Activated CD4-positive, alpha-beta memory T cell treated with anti-CD3 and anti-CD28 coated beads for 36 hours (primary cell): ENCODE measurements at regions of chr9 and their contacts with region 1.

Region 1: DNA sequence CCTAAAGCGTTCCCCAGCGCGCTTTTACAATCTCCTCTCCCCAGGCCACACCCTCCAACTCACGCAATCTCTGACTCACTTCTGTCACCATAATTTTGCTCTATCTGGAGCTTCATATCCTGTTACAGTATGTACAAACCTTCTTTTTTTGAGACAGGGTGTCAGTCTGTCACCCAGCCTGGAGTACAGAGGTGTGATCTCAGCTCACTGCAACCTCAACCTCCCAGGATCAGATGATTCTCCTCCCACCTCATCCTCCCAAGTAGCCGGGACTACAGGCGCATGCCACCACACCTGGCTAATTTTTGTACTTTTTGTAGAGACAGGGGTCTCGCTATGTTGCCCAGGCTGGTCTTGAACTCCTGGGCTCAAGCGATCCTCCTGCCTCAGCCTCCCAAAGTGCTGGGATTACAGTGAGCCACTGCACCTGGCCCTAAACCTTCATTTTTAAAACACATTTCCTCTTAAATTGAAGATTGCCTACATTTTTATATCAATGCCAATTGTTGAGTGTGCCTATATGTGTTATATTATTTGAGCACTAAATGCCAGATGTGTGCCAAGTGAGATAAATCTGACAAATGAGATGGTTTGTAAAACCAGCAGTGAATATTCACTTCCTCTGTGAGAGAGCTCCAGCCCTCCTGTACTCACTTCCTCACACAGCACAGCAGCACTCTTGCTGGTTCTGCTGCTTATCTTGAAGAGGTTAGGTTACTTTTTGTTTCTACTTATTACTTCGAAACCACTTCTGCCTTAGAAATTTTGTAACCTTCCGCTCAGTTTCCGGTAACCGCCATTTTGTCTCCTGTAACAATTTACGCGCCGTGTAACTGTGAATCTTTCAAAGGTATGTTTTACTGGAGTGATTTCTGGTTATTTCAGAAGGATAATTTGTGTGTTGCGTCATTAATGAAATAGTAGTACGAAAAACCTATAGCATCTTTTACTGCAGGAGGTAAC is 57.9 kb downstream of the DOCK8 start:
- DNase-seq: peak; percentile 83
- H3K4me3 Mint-ChIP-seq: peak overlapping the region; percentile 86
- H3K27ac Mint-ChIP-seq: peak overlapping the region; percentile 100
- H3K4me1 Mint-ChIP-seq: peaks cover 64% of the 10 kb centered on the region
- H3K27me3 Mint-ChIP-seq: no peaks in the 10 kb centered on the region

Region 2: DNA sequence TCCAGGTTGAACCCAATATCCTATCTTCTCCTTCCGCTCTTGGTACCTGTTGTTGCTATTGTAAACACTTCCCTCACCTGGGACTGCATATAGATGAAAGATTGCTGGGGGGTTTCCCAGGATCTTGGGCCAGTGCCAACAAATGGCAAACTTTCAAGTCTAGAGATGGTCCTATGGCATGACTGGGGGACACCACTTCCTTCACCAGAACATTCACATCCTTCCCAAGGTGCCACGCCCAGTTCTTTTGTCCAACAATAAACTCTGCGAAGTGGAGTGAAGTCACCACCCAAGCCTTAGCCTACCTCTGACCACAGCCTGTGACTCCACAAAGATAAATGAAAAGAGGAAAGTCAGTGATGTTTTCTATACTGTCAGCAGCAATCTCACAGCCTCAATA is 23.5 kb before region 1 on chr9:
- CTCF ChIA-PET with region 1: no interaction called
- POLR2A ChIA-PET with region 1: no interaction called
- intact Hi-C with region 1: loop called (anchors 2 kb)
- DNase-seq: peak; percentile 52
- H3K4me3 Mint-ChIP-seq: no peak overlapping the region
- H3K27ac Mint-ChIP-seq: peak overlapping the region; percentile 71
- H3K4me1 Mint-ChIP-seq: peaks cover 18% of the 10 kb centered on the region
- H3K27me3 Mint-ChIP-seq: no peaks in the 10 kb centered on the region

Region 3: GRCh38 chr9:306887-307286 is 34.4 kb after region 1 on chr9:
- CTCF ChIA-PET with region 1: no interaction called
- POLR2A ChIA-PET with region 1: no interaction called
- intact Hi-C with region 1: loop called (anchors 2 kb)
- DNase-seq: peak; percentile 69
- H3K4me3 Mint-ChIP-seq: no peak overlapping the region
- H3K27ac Mint-ChIP-seq: peak overlapping the region; percentile 44
- H3K4me1 Mint-ChIP-seq: peaks cover 19% of the 10 kb centered on the region
- H3K27me3 Mint-ChIP-seq: no peaks in the 10 kb centered on the region

Region 4: DNA sequence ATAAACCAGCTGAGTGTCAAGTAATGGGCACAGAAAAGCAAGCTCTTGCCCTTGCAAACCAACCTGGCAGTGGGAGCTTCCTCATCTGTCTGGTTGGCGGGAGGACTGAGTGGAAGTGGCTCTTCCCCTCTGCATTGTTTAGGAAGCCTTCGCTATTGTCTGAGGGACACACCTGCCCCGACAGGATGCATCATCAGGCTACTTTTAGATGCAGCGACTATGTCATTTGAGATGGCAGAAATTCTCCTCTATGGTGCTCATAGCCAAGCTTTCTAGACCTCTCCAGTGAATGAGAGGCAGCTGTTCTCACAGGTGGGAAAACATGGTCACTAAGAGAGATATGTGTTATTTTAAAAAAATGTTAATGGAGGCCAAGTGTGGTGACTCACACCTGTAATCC is 46.1 kb after region 1 on chr9:
- CTCF ChIA-PET with region 1: no interaction called
- POLR2A ChIA-PET with region 1: no interaction called
- intact Hi-C with region 1: no loop called
- DNase-seq: no peak
- H3K4me3 Mint-ChIP-seq: no peak overlapping the region
- H3K27ac Mint-ChIP-seq: no peak overlapping the region
- H3K4me1 Mint-ChIP-seq: peaks cover 6% of the 10 kb centered on the region
- H3K27me3 Mint-ChIP-seq: no peaks in the 10 kb centered on the region

Region 5: GRCh38 chr9:347667-348292 is 75.2 kb after region 1 on chr9:
- CTCF ChIA-PET with region 1: no interaction called
- POLR2A ChIA-PET with region 1: no interaction called
- intact Hi-C with region 1: no loop called
- DNase-seq: no peak
- H3K4me3 Mint-ChIP-seq: no peak overlapping the region
- H3K27ac Mint-ChIP-seq: peak overlapping the region; percentile 4
- H3K4me1 Mint-ChIP-seq: peaks cover 31% of the 10 kb centered on the region
- H3K27me3 Mint-ChIP-seq: no peaks in the 10 kb centered on the region

Region 6: DNA sequence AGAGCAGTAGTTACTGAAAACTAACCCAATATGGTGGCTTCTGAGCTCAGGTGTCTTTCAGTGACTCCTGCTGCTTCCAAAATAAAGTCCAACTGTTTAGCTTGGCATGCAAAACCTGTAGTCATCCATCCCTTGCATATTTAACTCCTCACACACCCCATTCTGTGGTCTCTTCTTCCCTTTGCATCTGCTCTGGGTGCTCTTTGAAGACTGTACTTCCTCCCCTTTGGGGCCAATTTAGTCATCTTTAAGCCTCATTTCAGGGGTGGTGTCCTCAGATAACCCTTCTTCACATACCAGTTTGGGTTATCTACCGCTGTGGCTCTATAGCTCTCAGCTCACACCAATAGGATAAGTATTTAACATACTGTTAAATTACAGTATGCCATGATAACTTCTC is 359.1 kb after region 1 on chr9:
- CTCF ChIA-PET with region 1: no interaction called
- POLR2A ChIA-PET with region 1: no interaction called
- intact Hi-C with region 1: loop called (anchors 10 kb)
- DNase-seq: no peak
- H3K4me3 Mint-ChIP-seq: no peak overlapping the region
- H3K27ac Mint-ChIP-seq: no peak overlapping the region
- H3K4me1 Mint-ChIP-seq: peaks cover 25% of the 10 kb centered on the region
- H3K27me3 Mint-ChIP-seq: no peaks in the 10 kb centered on the region